MCF 10A (cell line): ENCODE measurements at regions of chr1 and their contacts with region 1.

Region 1: DNA sequence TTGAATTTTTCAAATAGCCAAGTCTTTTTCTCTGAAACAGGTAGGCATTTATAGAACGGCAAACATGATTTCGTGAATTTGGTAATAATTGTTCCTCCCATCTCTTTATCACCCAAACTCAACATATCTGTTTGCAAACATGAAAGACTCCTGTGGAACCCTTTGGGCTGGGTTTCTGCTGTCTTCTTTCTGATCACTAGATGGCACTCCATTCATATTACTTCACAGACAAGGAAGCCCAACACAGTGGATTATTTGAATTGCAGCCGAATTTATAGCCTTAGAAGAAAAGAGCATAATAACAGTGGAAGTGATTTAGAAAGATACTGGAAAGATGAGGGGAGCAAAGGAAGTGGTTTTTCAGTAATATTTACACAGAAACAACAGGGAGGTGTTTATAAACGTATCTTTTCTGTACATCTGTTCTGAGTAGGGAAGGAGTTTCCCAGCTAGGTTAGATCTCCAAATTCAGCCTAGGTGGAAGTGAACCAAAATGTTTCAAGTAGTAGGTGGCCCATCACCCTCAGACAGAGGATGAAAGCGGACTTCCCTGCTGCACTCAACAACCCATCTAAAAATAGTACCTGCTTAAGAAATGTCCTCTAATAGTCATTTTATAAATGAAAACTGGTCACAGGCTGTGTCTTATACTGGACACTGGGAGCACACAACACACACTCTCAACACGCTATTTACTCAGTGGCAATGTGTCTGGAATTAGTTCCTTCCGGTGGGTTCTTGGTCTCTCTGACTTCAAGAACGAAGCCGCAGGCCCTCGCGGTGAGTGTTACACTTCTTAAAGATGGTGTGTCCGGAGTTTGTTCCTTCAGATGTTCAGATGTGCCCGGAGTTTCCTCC is 67.6 kb downstream of the MAP3K21 start:
- DNase-seq: peak; percentile 81
- H3K4me3 Mint-ChIP-seq: no peak overlapping the region
- H3K27ac Mint-ChIP-seq: no peak overlapping the region
- H3K4me1 Mint-ChIP-seq: no peaks in the 10 kb centered on the region
- H3K27me3 Mint-ChIP-seq: no peaks in the 10 kb centered on the region
- CTCF ChIP-seq: peak; percentile 98

Region 2: GRCh38 chr1:233412812-233413211 is 17.7 kb after region 1 on chr1:
- CTCF ChIA-PET with region 1: interaction called, 17 read pairs
- POLR2A ChIA-PET with region 1: no interaction called
- intact Hi-C with region 1: no loop called
- DNase-seq: peak; percentile 87
- H3K4me3 Mint-ChIP-seq: no peak overlapping the region
- H3K27ac Mint-ChIP-seq: no peak overlapping the region
- H3K4me1 Mint-ChIP-seq: peaks cover 8% of the 10 kb centered on the region
- H3K27me3 Mint-ChIP-seq: no peaks in the 10 kb centered on the region
- CTCF ChIP-seq: no peak

Region 3: GRCh38 chr1:233424779-233425178 is 29.7 kb after region 1 on chr1:
- CTCF ChIA-PET with region 1: interaction called, 8 read pairs
- POLR2A ChIA-PET with region 1: interaction called, 3 read pairs
- intact Hi-C with region 1: loop called (anchors 1 kb)
- DNase-seq: peak; percentile 54
- H3K4me3 Mint-ChIP-seq: no peak overlapping the region
- H3K27ac Mint-ChIP-seq: no peak overlapping the region
- H3K4me1 Mint-ChIP-seq: peaks cover 5% of the 10 kb centered on the region
- H3K27me3 Mint-ChIP-seq: no peaks in the 10 kb centered on the region
- CTCF ChIP-seq: peak; percentile 40

Region 4: GRCh38 chr1:234065794-234066447 is 670.8 kb after region 1 on chr1:
- CTCF ChIA-PET with region 1: interaction called, 71 read pairs
- POLR2A ChIA-PET with region 1: no interaction called
- intact Hi-C with region 1: loop called (anchors 1 kb)
- DNase-seq: peak; percentile 89
- H3K4me3 Mint-ChIP-seq: no peak overlapping the region
- H3K27ac Mint-ChIP-seq: no peak overlapping the region
- H3K4me1 Mint-ChIP-seq: peaks cover 5% of the 10 kb centered on the region
- H3K27me3 Mint-ChIP-seq: no peaks in the 10 kb centered on the region
- CTCF ChIP-seq: peak; percentile 98